ENCODE measurements at regions of chr6 and their contacts with region 1.

Region 1: DNA sequence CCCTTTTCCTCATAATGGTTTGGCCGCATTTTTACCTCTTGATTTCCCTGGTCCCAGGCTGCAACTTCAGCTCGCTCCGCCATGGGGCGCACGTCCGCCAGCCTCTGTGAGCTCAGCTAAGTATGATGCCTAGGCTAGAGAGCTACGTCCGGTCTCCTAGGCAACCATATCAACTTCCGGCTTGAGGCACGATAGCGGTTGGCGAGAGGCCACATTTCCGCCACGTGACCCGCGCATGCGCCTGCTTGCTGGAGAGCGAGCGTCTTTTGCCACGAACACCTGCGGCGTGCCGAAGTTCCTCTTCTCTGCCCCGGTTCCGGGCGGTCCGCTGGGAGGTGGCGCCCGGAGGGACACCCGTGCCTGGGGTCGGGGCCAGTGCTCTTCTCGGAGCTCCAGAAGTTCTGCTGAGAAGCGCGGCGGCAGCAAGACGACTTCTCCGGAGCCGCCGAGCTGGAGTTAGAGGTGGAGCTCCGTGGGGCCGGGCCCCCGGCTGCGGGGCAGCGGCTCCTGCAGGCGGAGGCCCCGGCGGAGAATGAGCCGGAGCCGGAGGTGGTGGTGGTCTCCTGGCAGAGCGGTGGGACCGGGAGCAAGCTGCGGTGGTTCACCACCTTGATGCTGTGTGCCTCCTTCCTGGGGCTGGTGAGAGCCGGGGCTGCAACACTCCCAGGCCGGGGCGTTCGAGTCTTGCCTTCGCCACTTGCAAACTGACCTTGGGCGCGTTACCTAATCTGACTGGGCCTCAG is 172.0 kb downstream of the SLC16A10 start:
- DNase-seq: peak; percentile 99
- CTCF ChIP-seq: peak; percentile 97

Region 2: DNA sequence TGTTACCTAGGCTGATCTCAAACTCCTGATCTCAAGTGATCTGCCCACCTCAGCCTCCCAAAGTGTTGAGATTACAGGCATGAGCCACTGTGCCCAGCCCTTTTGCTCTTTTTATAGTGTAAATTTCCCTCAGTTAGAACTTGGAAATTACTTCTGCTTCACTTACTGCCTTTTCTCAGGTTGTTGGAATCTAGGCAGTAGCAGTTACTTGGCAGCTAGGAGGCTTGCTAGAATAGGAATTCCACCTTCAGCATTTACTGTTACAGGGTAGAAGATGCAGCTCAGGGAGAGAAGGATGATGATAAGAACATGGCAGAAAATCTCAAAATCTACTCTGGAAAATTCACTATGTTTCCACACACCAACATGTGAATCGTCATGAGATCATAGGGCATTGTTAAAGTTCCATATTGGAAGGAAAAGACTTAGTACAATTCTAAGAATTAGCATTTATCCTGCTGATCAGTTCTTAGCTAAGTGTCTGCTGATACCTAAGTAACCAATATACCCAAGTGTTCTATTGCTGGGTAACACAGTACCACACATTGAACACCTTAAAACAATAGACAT is 10.2 kb after region 1 on chr6:
- CTCF ChIA-PET with region 1: interaction called, 25 read pairs
- POLR2A ChIA-PET with region 1: no interaction called
- DNase-seq: no peak
- CTCF ChIP-seq: no peak

Region 3: GRCh38 chr6:111478749-111479148 is 219.5 kb after region 1 on chr6:
- CTCF ChIA-PET with region 1: interaction called, 63 read pairs
- POLR2A ChIA-PET with region 1: interaction called, 11 read pairs
- DNase-seq: peak; percentile 43
- CTCF ChIP-seq: peak; percentile 55

Region 4: GRCh38 chr6:111565326-111566221 is 306.3 kb after region 1 on chr6:
- CTCF ChIA-PET with region 1: interaction called, 19 read pairs
- POLR2A ChIA-PET with region 1: interaction called, 3 read pairs
- DNase-seq: peak; percentile 62
- CTCF ChIP-seq: peak; percentile 35

Region 5: DNA sequence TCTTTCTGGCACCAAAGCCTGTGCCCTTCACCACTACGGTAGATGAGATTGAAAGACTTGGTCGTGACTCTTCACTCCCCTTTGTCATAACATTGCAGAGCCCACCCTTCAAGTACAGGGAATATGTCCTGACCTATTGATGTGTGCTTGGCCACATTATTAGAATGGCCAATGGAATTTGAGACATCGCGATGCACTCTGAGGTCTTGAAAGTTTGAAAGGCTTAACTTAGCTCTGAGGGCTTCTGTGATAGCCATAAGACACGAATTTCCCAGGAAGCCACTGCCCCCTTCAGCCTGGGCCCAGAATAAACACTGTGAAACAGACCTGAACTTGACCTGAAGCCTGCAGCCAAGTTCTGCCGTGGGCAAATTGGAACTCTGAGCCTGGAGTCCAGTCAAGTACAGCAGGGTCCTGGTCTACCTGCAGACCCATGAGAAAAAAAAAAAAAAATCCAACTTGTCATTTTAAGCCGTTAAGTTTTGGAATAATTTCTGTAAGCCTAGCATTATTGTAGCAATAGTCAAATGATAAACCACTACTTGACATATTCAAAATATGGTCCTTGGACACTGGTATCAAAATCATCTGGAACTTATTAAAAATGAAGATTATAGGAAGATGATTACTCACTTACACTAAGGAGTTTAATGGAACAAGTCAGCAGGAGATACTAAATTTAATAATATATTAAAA is 383.4 kb after region 1 on chr6:
- CTCF ChIA-PET with region 1: interaction called, 21 read pairs
- POLR2A ChIA-PET with region 1: no interaction called
- DNase-seq: peak; percentile 71
- CTCF ChIP-seq: peak; percentile 57

Region 6: GRCh38 chr6:111764238-111765175 is 505.2 kb after region 1 on chr6:
- CTCF ChIA-PET with region 1: no interaction called
- POLR2A ChIA-PET with region 1: no interaction called
- DNase-seq: peak; percentile 69
- CTCF ChIP-seq: no peak

Measured in GM10248 (cell line).